CD8-positive, alpha-beta T cell (primary cell): ENCODE measurements at regions of chr10 and their contacts with region 1.

Region 1: DNA sequence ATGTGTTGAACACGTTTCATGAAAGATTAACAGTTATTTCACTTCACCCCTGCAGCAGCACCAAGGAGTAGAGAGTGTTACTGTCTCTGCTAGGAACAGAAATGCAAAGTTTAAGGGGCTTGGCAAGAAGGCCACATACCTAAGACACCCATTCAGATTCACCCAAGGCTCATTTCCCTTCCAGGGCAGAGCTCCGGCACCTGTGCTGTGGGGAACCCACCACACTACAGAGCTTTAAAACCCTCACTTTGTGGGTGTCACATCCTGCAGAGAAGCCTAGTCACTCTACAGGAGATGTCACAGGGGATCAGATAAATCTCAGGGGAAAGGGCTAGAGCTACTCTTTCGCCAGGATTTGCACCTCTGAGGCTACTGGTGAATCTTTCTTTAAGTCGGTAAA is 176.1 kb upstream of the KLF6 start:
- DNase-seq: peak; percentile 34 to 89 (median 59)
- ATAC-seq: peak; percentile 98
- H3K4me3 ChIP-seq: no peak overlapping the region
- H3K4me3 Mint-ChIP-seq: peak overlapping the region; percentile 32
- H3K27ac ChIP-seq: peak overlapping the region in 1 of 2 experiments; percentile 5
- H3K27ac Mint-ChIP-seq: peak overlapping the region; percentile 76
- H3K4me1 ChIP-seq: peaks cover 24% of the 10 kb centered on the region
- H3K4me1 Mint-ChIP-seq: peaks cover 36% of the 10 kb centered on the region
- H3K27me3 ChIP-seq: no peaks in the 10 kb centered on the region
- H3K27me3 Mint-ChIP-seq: no peaks in the 10 kb centered on the region
- CTCF ChIP-seq: no peak

Region 2: GRCh38 chr10:4034907-4035598 is 74.0 kb after region 1 on chr10:
- CTCF ChIA-PET with region 1: no interaction called
- POLR2A ChIA-PET with region 1: no interaction called
- intact Hi-C with region 1: loop called in 1 of 2 experiments (anchors 5 kb)
- DNase-seq: peak in 3 of 9 experiments; percentile 20 to 50 (median 41)
- ATAC-seq: peak; percentile 42
- H3K4me3 ChIP-seq: peak overlapping the region; percentile 28 to 47
- H3K4me3 Mint-ChIP-seq: peak overlapping the region; percentile 78
- H3K27ac ChIP-seq: peak overlapping the region in 1 of 2 experiments; percentile 8
- H3K27ac Mint-ChIP-seq: peak overlapping the region; percentile 46
- H3K4me1 ChIP-seq: peaks cover 14% of the 10 kb centered on the region
- H3K4me1 Mint-ChIP-seq: peaks cover 19% of the 10 kb centered on the region
- H3K27me3 ChIP-seq: no peaks in the 10 kb centered on the region
- H3K27me3 Mint-ChIP-seq: no peaks in the 10 kb centered on the region
- CTCF ChIP-seq: no peak